ENCODE measurements at regions of chr3 and their contacts with region 1.

Region 1: DNA sequence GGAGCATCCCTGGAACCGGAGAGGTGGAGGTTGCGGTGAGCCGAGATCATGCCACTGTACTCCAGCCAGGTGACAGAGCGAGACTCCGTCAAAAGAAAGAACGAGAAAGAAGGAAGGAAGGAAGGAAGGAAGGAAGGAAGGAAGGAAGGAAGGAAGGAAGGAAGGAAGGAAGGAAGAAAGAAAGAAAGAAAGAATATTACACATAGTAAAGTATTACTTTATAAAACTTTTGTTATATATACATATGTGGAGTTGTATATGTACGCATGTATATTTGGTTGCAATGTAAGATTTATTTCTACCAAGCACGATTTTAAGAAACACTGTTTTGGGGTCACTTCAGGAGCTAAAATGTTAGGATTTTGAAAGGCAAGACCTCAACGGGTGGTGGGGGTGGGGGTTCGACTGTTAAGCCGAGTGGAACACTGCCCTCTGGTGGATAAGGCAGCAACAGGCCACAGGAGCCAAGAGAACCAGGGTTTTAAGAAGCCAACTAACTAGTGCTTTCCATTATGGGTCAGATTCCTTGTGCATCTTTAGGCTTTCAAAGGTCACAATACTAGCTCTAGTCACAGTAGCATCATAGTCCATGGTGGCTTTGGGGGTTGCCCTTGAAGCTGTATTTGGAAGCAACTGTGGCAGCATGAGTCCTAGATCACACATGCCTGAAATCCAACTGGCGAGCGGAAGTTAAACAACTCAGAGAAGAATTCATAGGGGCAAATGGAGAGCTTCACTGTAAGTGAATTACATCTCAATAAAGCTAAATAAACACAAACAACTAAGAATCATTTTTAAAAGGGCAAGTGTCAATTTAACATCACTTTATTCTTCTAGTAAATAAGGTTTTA is 22.5 kb downstream of the GLB1 start:
- DNase-seq: peak; percentile 62 to 68 (median 65)
- H3K4me3 ChIP-seq: no peak overlapping the region
- H3K4me3 Mint-ChIP-seq: peak overlapping the region in 3 of 8 donors; percentile 56 to 70 (median 67)
- H3K27ac ChIP-seq: no peak overlapping the region
- H3K27ac Mint-ChIP-seq: peak overlapping the region; percentile 34 to 75 (median 54)
- H3K4me1 ChIP-seq: peaks cover 40% of the 10 kb centered on the region
- H3K4me1 Mint-ChIP-seq: peaks cover 31 to 55% (median 43%) of the 10 kb centered on the region in 4 donors
- H3K27me3 ChIP-seq: no peaks in the 10 kb centered on the region
- H3K27me3 Mint-ChIP-seq: no peaks in the 10 kb centered on the region

Region 2: GRCh38 chr3:32913790-32914446 is 160.5 kb before region 1 on chr3:
- CTCF ChIA-PET with region 1: no interaction called
- POLR2A ChIA-PET with region 1: no interaction called
- intact Hi-C with region 1: no loop called
- DNase-seq: no peak
- H3K4me3 ChIP-seq: no peak overlapping the region
- H3K4me3 Mint-ChIP-seq: no peak overlapping the region
- H3K27ac ChIP-seq: no peak overlapping the region
- H3K27ac Mint-ChIP-seq: peak overlapping the region in 2 of 7 donors; percentile 3 to 38
- H3K4me1 ChIP-seq: peaks cover 10% of the 10 kb centered on the region
- H3K4me1 Mint-ChIP-seq: peaks cover 5 to 14% (median 9%) of the 10 kb centered on the region in 4 donors
- H3K27me3 ChIP-seq: no peaks in the 10 kb centered on the region
- H3K27me3 Mint-ChIP-seq: no peaks in the 10 kb centered on the region

Region 3: DNA sequence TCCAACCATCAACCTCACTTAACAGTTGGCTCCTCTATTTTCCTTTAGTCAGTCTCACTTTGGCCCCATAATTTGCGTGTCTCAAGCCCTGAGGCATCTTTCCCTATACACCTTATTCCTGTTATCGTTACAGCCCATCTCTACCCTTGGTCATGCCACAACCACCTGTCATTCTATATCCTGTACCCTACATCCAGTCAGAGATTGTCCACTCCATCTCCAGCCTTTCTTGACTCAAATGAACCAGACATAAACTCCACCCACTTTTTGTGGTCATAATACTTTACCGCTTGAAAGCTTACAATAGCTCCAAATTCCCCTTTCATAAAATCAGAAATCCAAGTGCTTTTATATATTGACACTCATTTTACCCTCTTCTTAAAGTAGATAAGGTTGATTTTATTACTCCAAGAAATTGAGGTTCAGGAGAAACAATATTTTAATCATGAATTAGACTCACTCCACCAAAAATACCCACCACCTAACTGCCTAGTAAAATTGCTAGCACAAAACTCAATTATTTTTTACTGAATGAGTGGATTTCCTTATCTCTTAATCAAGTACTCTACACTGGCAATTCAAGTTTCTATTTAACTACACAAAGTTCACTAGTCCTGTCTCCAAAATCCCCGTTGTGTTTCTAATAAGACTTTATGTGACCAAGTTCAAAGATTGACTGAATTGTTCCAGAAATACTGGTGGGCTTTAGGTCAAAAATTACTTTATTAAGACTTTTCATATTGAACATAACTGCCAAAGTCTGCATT is 113.9 kb before region 1 on chr3:
- CTCF ChIA-PET with region 1: interaction called, 402 read pairs
- POLR2A ChIA-PET with region 1: no interaction called
- intact Hi-C with region 1: no loop called
- DNase-seq: peak; percentile 45 to 66 (median 55)
- H3K4me3 ChIP-seq: no peak overlapping the region
- H3K4me3 Mint-ChIP-seq: peak overlapping the region in 7 of 8 donors; percentile 18 to 75 (median 64)
- H3K27ac ChIP-seq: peak overlapping the region; percentile 31
- H3K27ac Mint-ChIP-seq: peak overlapping the region; percentile 63 to 99 (median 92)
- H3K4me1 ChIP-seq: peaks cover 71% of the 10 kb centered on the region
- H3K4me1 Mint-ChIP-seq: peaks cover 35 to 66% (median 56%) of the 10 kb centered on the region in 4 donors
- H3K27me3 ChIP-seq: no peaks in the 10 kb centered on the region
- H3K27me3 Mint-ChIP-seq: no peaks in the 10 kb centered on the region

Region 4: DNA sequence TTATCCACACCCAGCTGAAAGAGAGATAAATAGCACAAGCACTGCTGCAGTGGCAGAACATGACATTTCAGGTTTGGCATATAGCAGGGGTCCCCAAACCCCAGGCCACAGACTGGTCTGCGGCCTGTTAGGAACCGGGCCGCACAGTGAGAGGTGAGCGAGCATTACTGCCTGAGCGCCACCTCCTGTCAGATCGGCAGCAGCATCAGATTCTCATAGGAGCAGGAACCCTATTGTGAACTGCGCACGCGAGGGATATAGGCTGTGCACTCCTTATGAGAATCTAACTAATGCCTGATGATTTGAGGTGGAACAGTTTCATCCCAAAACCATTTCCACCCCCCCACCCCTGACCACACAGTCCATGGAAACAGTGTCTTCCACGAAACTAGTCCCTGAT is 68.4 kb before region 1 on chr3:
- CTCF ChIA-PET with region 1: interaction called, 11 read pairs
- POLR2A ChIA-PET with region 1: interaction called, 4 read pairs
- intact Hi-C with region 1: loop called (anchors 2 kb)
- DNase-seq: peak; percentile 27 to 61 (median 51)
- H3K4me3 ChIP-seq: no peak overlapping the region
- H3K4me3 Mint-ChIP-seq: peak overlapping the region in 7 of 8 donors; percentile 20 to 62 (median 40)
- H3K27ac ChIP-seq: peak overlapping the region; percentile 0
- H3K27ac Mint-ChIP-seq: peak overlapping the region; percentile 73 to 94 (median 86)
- H3K4me1 ChIP-seq: peaks cover 78% of the 10 kb centered on the region
- H3K4me1 Mint-ChIP-seq: peaks cover 41 to 81% (median 66%) of the 10 kb centered on the region in 4 donors
- H3K27me3 ChIP-seq: no peaks in the 10 kb centered on the region
- H3K27me3 Mint-ChIP-seq: no peaks in the 10 kb centered on the region

Region 5: GRCh38 chr3:33030802-33031201 is 43.6 kb before region 1 on chr3:
- CTCF ChIA-PET with region 1: interaction called, 171 read pairs
- POLR2A ChIA-PET with region 1: interaction called, 9 read pairs
- intact Hi-C with region 1: no loop called
- DNase-seq: peak; percentile 58 to 77 (median 72)
- H3K4me3 ChIP-seq: no peak overlapping the region
- H3K4me3 Mint-ChIP-seq: peak overlapping the region in 7 of 8 donors; percentile 32 to 73 (median 54)
- H3K27ac ChIP-seq: no peak overlapping the region
- H3K27ac Mint-ChIP-seq: peak overlapping the region; percentile 52 to 94 (median 83)
- H3K4me1 ChIP-seq: peaks cover 29% of the 10 kb centered on the region
- H3K4me1 Mint-ChIP-seq: peaks cover 24 to 49% (median 31%) of the 10 kb centered on the region in 4 donors
- H3K27me3 ChIP-seq: no peaks in the 10 kb centered on the region
- H3K27me3 Mint-ChIP-seq: no peaks in the 10 kb centered on the region

Region 6: GRCh38 chr3:33063651-33064051 is 10.8 kb before region 1 on chr3:
- CTCF ChIA-PET with region 1: interaction called, 35 read pairs
- POLR2A ChIA-PET with region 1: interaction called, 62 read pairs
- intact Hi-C with region 1: no loop called
- DNase-seq: peak; percentile 48 to 84 (median 49)
- H3K4me3 ChIP-seq: no peak overlapping the region
- H3K4me3 Mint-ChIP-seq: peak overlapping the region; percentile 7 to 86 (median 78)
- H3K27ac ChIP-seq: peak overlapping the region; percentile 71
- H3K27ac Mint-ChIP-seq: peak overlapping the region; percentile 89 to 100 (median 99)
- H3K4me1 ChIP-seq: peaks cover 83% of the 10 kb centered on the region
- H3K4me1 Mint-ChIP-seq: peaks cover 60 to 91% (median 73%) of the 10 kb centered on the region in 4 donors
- H3K27me3 ChIP-seq: no peaks in the 10 kb centered on the region
- H3K27me3 Mint-ChIP-seq: no peaks in the 10 kb centered on the region

Region 7: GRCh38 chr3:33113772-33114621 is 39.6 kb after region 1 on chr3 and contains the start of gene CRTAP:
- CTCF ChIA-PET with region 1: interaction called, 10 read pairs
- POLR2A ChIA-PET with region 1: no interaction called
- intact Hi-C with region 1: no loop called
- DNase-seq: peak; percentile 85 to 88 (median 87)
- H3K4me3 ChIP-seq: peak within 1 kb of the TSS; percentile 71 to 83
- H3K4me3 Mint-ChIP-seq: peak within 1 kb of the TSS; percentile 83 to 92 (median 89)
- H3K27ac ChIP-seq: peak within 1 kb of the TSS; percentile 55
- H3K27ac Mint-ChIP-seq: peak within 1 kb of the TSS; percentile 75 to 94 (median 91)
- H3K4me1 ChIP-seq: peaks cover 42% of the 10 kb centered on the region
- H3K4me1 Mint-ChIP-seq: peaks cover 32 to 65% (median 48%) of the 10 kb centered on the region in 4 donors
- H3K27me3 ChIP-seq: no peaks in the 10 kb centered on the region
- H3K27me3 Mint-ChIP-seq: no peaks in the 10 kb centered on the region
- total RNA-seq, gene CRTAP: 75.4 to 84.4 TPM